Dendritic cell treated with granulocyte-macrophage colony-stimulating factor and Interleukin-4, amounts not matched to agents 40 ng/mL and 50 ng/mL, for 4 days (primary cell): ENCODE measurements at regions of chr9 and their contacts with region 1.

Region 1: DNA sequence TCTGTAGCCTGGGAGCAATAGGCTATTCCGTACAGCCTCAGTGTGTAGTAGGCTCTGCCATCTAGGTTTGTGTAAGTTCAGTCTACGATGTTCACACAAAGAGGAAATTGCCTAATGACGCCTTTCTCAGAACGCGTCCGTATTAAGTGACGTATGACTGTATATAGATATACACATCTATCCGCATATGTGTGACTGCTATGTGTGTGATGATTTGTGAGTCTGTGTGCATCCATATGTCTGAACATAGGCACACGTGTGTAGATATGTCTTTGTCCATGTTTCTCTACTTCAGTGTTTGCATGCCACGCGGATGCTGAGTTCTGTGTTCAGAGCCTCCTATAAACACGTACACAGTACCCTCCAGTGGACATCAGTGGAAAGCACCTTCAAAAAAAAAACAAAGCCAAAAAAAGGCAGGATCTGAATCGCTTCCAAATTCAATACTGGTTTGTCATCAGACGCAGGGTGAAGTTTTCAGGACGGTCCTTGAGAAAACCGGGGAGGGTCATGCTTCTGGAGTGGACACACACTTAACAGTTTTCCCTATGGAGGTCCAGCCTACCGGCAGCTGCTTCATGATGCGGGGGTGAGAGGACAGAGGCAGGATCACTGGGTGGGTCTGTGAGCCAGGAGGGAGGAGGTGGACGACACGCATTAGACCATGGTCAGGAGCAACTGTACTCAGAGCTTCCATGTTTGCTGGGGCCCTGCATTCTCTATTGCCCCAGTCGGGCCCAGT is 29.5 kb upstream of the ALDH1B1 start:
- H3K4me3 Mint-ChIP-seq: peak overlapping the region; percentile 63
- H3K27ac Mint-ChIP-seq: no peak overlapping the region
- H3K4me1 Mint-ChIP-seq: peaks cover 8% of the 10 kb centered on the region
- H3K27me3 Mint-ChIP-seq: no peaks in the 10 kb centered on the region

Region 2: DNA sequence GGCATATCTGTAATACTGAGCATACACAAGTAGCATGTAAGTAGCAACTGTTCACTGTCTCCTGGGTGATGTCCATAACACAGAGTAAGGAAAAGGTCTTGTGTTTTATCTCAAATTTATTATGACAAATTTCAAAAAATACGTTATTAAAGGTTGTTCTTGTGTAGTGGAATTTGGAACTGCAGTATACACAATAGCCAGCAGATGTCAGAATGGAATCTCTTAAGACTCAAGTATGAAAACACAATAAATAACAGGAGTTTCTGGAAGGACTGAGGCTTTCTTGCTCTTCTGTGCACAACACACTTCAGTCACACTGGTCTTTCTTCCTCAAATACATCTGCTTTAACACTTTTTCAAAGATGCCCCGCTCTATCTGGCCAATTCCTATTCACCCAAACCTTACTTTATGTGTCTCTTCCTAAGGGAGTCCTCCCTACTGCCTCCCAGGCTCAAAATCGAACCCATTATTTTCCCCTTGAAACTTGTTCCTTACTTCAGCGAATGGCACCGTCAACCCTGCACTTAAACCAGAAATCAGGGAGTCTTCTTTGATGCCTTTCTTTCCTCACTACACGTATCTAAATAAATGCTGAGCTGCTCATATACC is 780.4 kb before region 1 on chr9:
- intact Hi-C with region 1: loop called (anchors 10 kb)
- H3K4me3 Mint-ChIP-seq: no peak overlapping the region
- H3K27ac Mint-ChIP-seq: no peak overlapping the region
- H3K4me1 Mint-ChIP-seq: peaks cover 7% of the 10 kb centered on the region
- H3K27me3 Mint-ChIP-seq: no peaks in the 10 kb centered on the region

Region 3: GRCh38 chr9:37746848-37747753 is 615.9 kb before region 1 on chr9:
- intact Hi-C with region 1: loop called (anchors 1 kb)
- H3K4me3 Mint-ChIP-seq: no peak overlapping the region
- H3K27ac Mint-ChIP-seq: no peak overlapping the region
- H3K4me1 Mint-ChIP-seq: no peaks in the 10 kb centered on the region
- H3K27me3 Mint-ChIP-seq: no peaks in the 10 kb centered on the region

Region 4: GRCh38 chr9:37903647-37904444 is 459.2 kb before region 1 on chr9 and contains the start of gene SLC25A51:
- intact Hi-C with region 1: loop called (anchors 2 kb)
- H3K4me3 Mint-ChIP-seq: peak within 1 kb of the TSS; percentile 93
- H3K27ac Mint-ChIP-seq: peak within 1 kb of the TSS; percentile 90
- H3K4me1 Mint-ChIP-seq: peaks cover 28% of the 10 kb centered on the region
- H3K27me3 Mint-ChIP-seq: no peaks in the 10 kb centered on the region

Region 5: DNA sequence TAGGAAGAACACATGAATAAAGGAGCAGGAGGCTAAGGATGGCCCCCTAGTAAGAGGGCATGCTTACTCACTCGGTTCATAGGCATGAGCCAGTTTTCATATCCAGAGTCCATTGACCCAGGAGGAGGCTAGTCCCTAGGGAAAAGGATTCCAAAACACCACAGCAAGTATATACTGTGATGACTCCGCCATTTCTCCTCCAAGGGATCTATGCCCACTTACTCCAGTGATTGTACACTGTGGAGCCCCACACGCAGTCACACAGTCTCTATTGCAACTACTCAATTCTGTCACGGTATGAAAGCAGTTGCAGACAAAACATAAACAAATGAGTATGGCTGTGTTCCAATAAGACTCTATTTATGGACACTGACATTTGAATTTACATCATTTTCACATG is 88.2 kb before region 1 on chr9:
- intact Hi-C with region 1: no loop called
- H3K4me3 Mint-ChIP-seq: no peak overlapping the region
- H3K27ac Mint-ChIP-seq: no peak overlapping the region
- H3K4me1 Mint-ChIP-seq: no peaks in the 10 kb centered on the region
- H3K27me3 Mint-ChIP-seq: no peaks in the 10 kb centered on the region

Region 6: GRCh38 chr9:38339087-38339486 is 23.9 kb before region 1 on chr9:
- intact Hi-C with region 1: no loop called
- H3K4me3 Mint-ChIP-seq: no peak overlapping the region
- H3K27ac Mint-ChIP-seq: no peak overlapping the region
- H3K4me1 Mint-ChIP-seq: no peaks in the 10 kb centered on the region
- H3K27me3 Mint-ChIP-seq: no peaks in the 10 kb centered on the region